ENCODE measurements at regions of chr5 and their contacts with region 1.

Region 1: GRCh38 chr5:181243512-181244343 is at the start of gene RACK1:
- DNase-seq: peak in 1 of 2 experiments; percentile 91
- H3K4me3 ChIP-seq: peak within 1 kb of the TSS; percentile 83 to 100 (median 96)
- H3K27ac ChIP-seq: peak within 1 kb of the TSS; percentile 97
- H3K4me1 ChIP-seq: peaks cover 8 to 23% (median 13%) of the 10 kb centered on the region in 4 experiments
- H3K27me3 ChIP-seq: no peaks in the 10 kb centered on the region
- CTCF ChIP-seq: no peak
- EP300 ChIP-seq: 0 out of 3 replicates have a peak, but pooled peaks of 1 of the 2 experiments have one; percentile 67
- POLR2A ChIP-seq: peak in 1 of 2 experiments; percentile 93; a peak in 2 of 3 replicates
- RAD21 ChIP-seq: no peak
- total RNA-seq, gene RACK1: 2,564 and 2,589 TPM in 2 replicates

Region 2: GRCh38 chr5:181127907-181128626 is 115.7 kb before region 1 on chr5:
- CTCF ChIA-PET with region 1: no interaction called
- POLR2A ChIA-PET with region 1: no interaction called
- DNase-seq: no peak
- H3K4me3 ChIP-seq: no peak overlapping the region
- H3K27ac ChIP-seq: no peak overlapping the region
- H3K4me1 ChIP-seq: no peaks in the 10 kb centered on the region; a peak in 1 of 7 replicates
- H3K27me3 ChIP-seq: 0 out of 7 replicates have a peak, but pooled peaks cover 0 to 3% (median 0%) of the 10 kb centered on the region in 4 experiments
- CTCF ChIP-seq: no peak
- EP300 ChIP-seq: no peak
- POLR2A ChIP-seq: no peak
- RAD21 ChIP-seq: no peak

Region 3: DNA sequence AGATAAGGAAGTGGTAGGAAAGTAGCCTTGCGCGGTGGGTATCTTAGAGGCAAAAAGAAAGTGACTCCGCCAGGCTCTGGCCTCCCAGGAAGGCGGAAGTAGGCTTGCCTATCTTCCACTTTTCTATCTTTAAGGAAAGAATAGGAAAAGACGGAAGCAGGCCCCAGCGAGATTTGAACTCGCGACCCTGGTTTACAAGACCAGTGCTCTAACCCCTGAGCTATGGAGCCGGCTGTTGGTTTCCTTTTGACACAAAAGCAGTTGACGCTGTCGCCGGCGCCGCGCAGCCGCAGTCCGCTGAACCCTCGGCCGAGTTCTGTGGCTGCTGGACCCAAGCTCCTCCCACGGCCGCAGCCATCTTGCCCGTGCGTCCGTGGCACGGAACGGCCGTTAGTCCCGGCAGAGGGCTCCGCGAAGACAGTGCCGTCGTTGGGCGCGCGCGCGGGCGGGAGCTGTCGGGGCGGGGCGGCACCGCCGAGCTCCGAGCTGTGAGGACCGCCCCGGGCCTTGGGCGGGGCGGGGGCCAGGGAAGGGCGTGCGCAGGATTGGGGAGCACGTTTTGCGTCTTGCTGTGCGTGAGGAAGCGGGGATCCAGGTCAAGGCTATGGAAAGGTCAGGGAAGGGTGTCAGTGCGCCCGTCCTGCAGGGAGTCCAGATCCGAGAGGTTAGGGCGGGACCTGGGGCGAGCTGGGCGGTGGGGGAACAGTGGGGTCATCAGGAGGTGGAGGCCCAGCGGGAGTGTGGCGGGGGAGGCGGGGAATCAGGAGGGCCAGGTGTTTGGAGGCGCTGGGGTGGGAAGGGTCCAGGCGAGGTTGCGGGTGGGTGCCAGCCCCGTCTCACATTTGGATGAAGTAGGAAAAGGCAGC is 52.0 kb before region 1 on chr5:
- CTCF ChIA-PET with region 1: interaction called, 4 read pairs
- POLR2A ChIA-PET with region 1: interaction called, 28 read pairs
- DNase-seq: peak; percentile 87 to 100
- H3K4me3 ChIP-seq: peak overlapping the region; percentile 62 to 90 (median 78)
- H3K27ac ChIP-seq: no peak overlapping the region
- H3K4me1 ChIP-seq: peaks cover 0 to 11% (median 5%) of the 10 kb centered on the region in 4 experiments; a peak in 5 of 7 replicates
- H3K27me3 ChIP-seq: peaks cover 15 to 34% (median 23%) of the 10 kb centered on the region in 4 experiments; a peak in 6 of 7 replicates
- CTCF ChIP-seq: no peak
- EP300 ChIP-seq: no peak
- POLR2A ChIP-seq: no peak; a peak in 1 of 3 replicates
- RAD21 ChIP-seq: no peak

Region 4: GRCh38 chr5:181198963-181199519 is 44.7 kb before region 1 on chr5:
- CTCF ChIA-PET with region 1: interaction called, 3 read pairs
- POLR2A ChIA-PET with region 1: interaction called, 85 read pairs
- DNase-seq: no peak
- H3K4me3 ChIP-seq: peak overlapping the region in 1 of 4 experiments; percentile 22; a peak in 2 of 8 replicates
- H3K27ac ChIP-seq: no peak overlapping the region
- H3K4me1 ChIP-seq: peaks cover 9 to 36% (median 20%) of the 10 kb centered on the region in 4 experiments
- H3K27me3 ChIP-seq: peaks cover 11 to 60% (median 37%) of the 10 kb centered on the region in 4 experiments
- CTCF ChIP-seq: no peak
- EP300 ChIP-seq: no peak
- POLR2A ChIP-seq: no peak
- RAD21 ChIP-seq: no peak

Region 5: GRCh38 chr5:181207214-181208107 is 36.3 kb before region 1 on chr5:
- CTCF ChIA-PET with region 1: interaction called, 3 read pairs
- POLR2A ChIA-PET with region 1: interaction called, 85 read pairs
- DNase-seq: peak in 1 of 2 experiments; percentile 97
- H3K4me3 ChIP-seq: peak overlapping the region; percentile 59 to 91 (median 86)
- H3K27ac ChIP-seq: no peak overlapping the region
- H3K4me1 ChIP-seq: peaks cover 0 to 13% (median 5%) of the 10 kb centered on the region in 4 experiments; a peak in 5 of 7 replicates
- H3K27me3 ChIP-seq: peaks cover 28 to 41% (median 39%) of the 10 kb centered on the region in 4 experiments
- CTCF ChIP-seq: no peak
- EP300 ChIP-seq: no peak
- POLR2A ChIP-seq: no peak
- RAD21 ChIP-seq: no peak

Region 6: DNA sequence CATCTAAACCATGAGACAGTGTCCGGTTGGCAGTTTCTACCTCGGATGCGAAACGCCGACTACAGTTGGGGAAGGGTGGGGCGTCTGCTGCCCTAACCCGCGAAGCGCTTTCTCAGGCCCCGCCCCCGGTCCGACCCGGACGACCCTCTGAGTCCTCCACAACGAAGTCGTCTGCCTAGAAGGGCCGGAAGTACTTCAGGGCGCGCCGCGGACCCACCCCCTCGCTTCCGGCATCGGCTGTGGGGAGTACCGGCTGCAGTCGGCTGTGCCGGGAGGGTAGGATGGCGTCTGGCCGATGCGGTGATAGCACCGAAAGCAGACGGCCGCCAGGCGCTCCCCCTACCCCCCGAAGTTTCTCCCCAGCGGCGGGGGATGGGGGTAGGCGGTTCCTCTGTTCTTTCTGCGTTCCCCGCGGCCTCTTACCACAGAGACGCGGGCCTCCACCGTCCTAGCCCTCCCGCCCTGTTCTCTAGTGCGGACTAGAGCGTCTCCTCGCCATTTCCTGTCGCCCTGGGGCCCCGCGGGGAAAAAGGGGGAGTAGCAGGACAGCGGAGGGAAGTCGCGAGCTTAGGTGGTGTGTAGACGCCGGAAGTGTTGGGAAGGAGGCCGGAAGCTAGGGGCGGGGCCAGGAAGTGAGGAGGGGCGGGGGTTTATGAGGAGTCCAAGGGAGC is 20.5 kb before region 1 on chr5 and contains the start of gene TRIM41:
- CTCF ChIA-PET with region 1: interaction called, 4 read pairs
- POLR2A ChIA-PET with region 1: interaction called, 1,334 read pairs
- DNase-seq: peak; percentile 97
- H3K4me3 ChIP-seq: peak within 1 kb of the TSS; percentile 83 to 98 (median 95)
- H3K27ac ChIP-seq: peak within 1 kb of the TSS; percentile 78
- H3K4me1 ChIP-seq: peaks cover 0 to 8% (median 4%) of the 10 kb centered on the region in 4 experiments; a peak in 4 of 7 replicates
- H3K27me3 ChIP-seq: no peaks in the 10 kb centered on the region
- CTCF ChIP-seq: peak in 1 of 3 experiments; percentile 5; a peak in 1 of 4 replicates
- EP300 ChIP-seq: no peak
- POLR2A ChIP-seq: peak in 1 of 2 experiments; percentile 88; a peak in 2 of 3 replicates
- RAD21 ChIP-seq: 0 out of 4 replicates have a peak, but pooled peaks of 1 of the 2 experiments have one; percentile 14
- total RNA-seq, gene TRIM41: 21.2 and 21.6 TPM in 2 replicates

Region 7: GRCh38 chr5:181271081-181271480 is 27.4 kb after region 1 on chr5:
- CTCF ChIA-PET with region 1: no interaction called
- POLR2A ChIA-PET with region 1: interaction called, 1,334 read pairs
- DNase-seq: no peak
- H3K4me3 ChIP-seq: no peak overlapping the region
- H3K27ac ChIP-seq: no peak overlapping the region
- H3K4me1 ChIP-seq: peaks cover 0 to 2% (median 0%) of the 10 kb centered on the region in 4 experiments; a peak in 1 of 7 replicates
- H3K27me3 ChIP-seq: no peaks in the 10 kb centered on the region
- CTCF ChIP-seq: no peak
- EP300 ChIP-seq: no peak
- POLR2A ChIP-seq: no peak
- RAD21 ChIP-seq: no peak

Region 8: DNA sequence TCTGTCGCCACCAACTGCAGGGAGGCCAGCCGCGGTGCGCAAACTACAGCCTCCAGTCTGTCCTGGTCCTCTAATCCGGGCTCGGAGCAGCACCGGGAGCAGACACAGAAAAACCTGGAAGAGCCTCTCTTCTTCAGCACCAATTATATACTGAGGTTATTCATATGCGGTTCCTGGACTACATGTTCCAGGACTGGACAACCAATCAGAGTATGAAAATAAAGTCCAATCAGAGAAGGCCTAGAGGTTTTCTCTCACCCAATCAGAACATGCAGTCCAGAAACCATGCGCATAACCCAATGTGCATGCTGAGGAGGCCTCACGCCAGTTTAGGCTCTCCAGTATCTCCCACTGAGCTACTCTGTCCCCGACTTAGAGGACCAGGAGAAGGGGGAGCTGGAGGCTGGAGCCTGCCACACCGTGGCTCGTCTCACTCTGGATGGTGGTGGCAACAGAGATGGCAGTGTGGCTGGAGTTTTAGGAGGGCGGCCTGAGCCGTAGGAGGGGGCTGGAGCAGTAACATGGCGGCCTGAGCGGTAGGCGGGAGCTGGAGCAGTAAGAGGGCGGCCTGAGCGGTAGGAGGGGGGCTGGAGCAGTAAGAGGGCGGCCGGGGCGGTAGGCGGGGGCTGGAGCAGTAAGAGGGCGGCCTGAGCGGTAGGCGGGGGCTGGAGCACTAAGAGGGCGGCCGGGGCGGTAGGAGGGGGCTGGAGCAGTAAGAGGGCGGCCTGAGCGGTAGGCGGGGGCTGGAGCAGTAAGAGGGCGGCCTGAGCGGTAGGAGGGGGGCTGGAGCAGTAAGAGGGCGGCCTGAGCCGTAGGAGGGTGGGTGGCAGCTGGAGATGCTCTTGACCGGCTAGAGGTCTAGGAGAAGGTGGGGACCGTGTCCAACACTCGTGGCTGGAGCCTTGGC is 37.6 kb after region 1 on chr5:
- CTCF ChIA-PET with region 1: interaction called, 4 read pairs
- POLR2A ChIA-PET with region 1: interaction called, 40 read pairs
- DNase-seq: peak; percentile 85 to 91
- H3K4me3 ChIP-seq: peak overlapping the region; percentile 54 to 93 (median 88)
- H3K27ac ChIP-seq: peak overlapping the region; percentile 93
- H3K4me1 ChIP-seq: no peaks in the 10 kb centered on the region
- H3K27me3 ChIP-seq: no peaks in the 10 kb centered on the region
- CTCF ChIP-seq: no peak
- EP300 ChIP-seq: no peak
- POLR2A ChIP-seq: peak; percentile 86 to 87
- RAD21 ChIP-seq: no peak

Measured in H1 (cell line).